ENCODE measurements at regions of chr3 and their contacts with region 1.

Region 1: DNA sequence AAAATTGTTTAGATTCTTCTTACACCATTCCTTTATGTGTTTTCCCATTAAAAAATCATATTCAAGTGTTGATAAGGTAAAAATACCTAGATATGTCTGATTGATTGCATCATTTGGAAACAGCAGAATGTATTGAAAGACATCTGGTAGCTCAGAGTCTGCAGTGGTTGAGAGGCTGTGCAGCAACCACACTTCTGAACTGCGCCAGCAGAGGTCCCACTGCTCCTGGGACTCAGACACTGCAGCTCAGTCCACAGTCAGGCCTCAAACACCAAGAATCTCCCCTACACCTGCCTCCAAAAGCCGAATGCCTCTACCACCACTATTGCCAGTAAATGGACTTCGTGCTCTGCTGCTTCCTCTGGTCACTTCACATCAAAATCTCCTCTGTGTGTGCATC is 176.9 kb upstream of the LMCD1 start:
- DNase-seq: peak in 9 of 10 donors; percentile 35 to 68 (median 55)
- H3K4me3 ChIP-seq: peak overlapping the region in 2 of 59 donors; percentile 37 to 51
- H3K27ac ChIP-seq: peak overlapping the region in 12 of 59 donors; percentile 1 to 60 (median 31)
- H3K27me3 ChIP-seq: no peaks in the 10 kb centered on the region
- CTCF ChIP-seq: peak in 54 of 56 donors; percentile 28 to 73 (median 53)

Region 2: DNA sequence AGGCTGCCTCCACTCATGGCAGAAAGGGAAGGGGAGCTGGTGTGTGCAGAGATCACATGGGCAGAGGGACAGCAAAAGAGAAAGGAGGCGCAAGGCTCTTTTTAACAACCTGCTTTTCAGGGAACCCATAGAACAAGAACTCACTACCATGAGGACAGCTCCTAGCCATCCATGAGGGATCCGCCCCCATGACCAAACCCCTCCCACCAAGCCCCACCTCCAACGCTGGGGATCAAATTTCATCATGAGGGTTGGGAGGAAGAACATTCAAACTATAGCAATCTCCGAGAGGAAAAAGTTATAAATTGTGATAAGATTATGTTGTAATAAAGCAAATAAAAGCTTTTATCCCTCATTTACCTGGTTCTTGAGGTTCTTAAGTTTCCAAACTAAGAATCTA is 92.2 kb after region 1 on chr3:
- intact Hi-C with region 1: loop called (anchors 1 to 5 kb)
- DNase-seq: no peak
- H3K4me3 ChIP-seq: no peak overlapping the region
- H3K27ac ChIP-seq: no peak overlapping the region
- H3K27me3 ChIP-seq: no peaks in the 10 kb centered on the region
- CTCF ChIP-seq: no peak

Region 3: GRCh38 chr3:8629151-8630021 is 304.6 kb after region 1 on chr3:
- intact Hi-C with region 1: loop called in 1 of 2 experiments (anchors 5 kb)
- DNase-seq: peak in 4 of 10 donors; percentile 18 to 45 (median 44)
- H3K4me3 ChIP-seq: no peak overlapping the region
- H3K27ac ChIP-seq: no peak overlapping the region
- H3K27me3 ChIP-seq: no peaks in the 10 kb centered on the region
- CTCF ChIP-seq: no peak

Region 4: DNA sequence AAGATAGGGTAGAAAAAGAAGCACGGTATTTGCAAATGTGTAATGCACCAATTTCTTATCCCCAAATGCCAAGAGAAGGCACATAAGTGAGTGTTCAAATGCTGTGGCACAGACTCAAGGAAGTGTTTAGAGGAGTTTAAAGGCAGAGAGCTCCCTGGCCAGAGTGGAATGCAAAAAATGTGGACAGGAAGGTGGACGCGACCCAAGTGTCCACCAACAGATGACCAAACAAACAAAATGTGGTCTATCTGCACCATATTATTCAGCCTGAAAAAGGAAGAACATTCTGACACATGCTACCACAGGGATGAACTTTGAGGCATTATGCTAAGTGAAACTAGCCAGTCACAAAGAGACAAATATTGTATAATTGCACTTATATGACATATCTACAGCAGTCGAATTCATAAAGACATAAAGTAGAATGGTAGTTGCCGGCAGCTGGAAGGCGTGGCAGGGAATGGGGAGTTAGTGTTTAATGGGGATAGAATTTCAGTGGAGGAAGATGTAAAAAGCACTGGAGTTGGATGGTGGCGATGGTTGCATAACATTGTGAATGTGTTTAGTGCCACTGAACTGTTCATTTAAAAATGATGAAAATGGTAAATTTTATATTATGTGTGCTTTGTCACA is 798.1 kb after region 1 on chr3:
- intact Hi-C with region 1: no loop called
- DNase-seq: no peak
- H3K4me3 ChIP-seq: no peak overlapping the region
- H3K27ac ChIP-seq: peak overlapping the region in 2 of 59 donors; percentile 23 to 93
- H3K27me3 ChIP-seq: no peaks in the 10 kb centered on the region
- CTCF ChIP-seq: no peak

Measured in dorsolateral prefrontal cortex (tissue), 120 donors.